ENCODE measurements at regions of chr5 and their contacts with region 1.

Region 1: DNA sequence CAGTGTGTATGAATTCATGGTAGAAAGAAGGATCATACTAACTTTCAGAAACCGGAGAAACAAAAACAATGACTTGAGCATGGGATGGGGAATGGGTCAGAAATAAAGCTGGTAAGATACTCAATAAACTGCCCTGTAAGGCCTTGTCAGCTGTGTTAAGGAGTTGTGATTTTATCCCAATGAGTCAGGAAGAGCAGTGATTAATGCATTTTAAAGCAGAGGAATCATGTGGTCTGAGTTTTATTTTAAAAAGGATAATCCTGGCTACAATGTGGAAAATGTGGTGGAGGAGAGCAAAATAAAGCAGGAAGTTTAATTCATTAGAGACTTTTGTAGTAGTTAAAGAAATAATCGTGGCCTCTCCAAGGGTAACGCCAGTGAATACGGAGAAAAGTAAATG is 28.7 kb downstream of the DHX29 start:
- H3K4me3 Mint-ChIP-seq: no peak overlapping the region
- H3K27ac Mint-ChIP-seq: no peak overlapping the region
- H3K4me1 Mint-ChIP-seq: no peaks in the 10 kb centered on the region
- H3K27me3 Mint-ChIP-seq: no peaks in the 10 kb centered on the region

Region 2: GRCh38 chr5:55763746-55764420 is 485.1 kb after region 1 on chr5:
- intact Hi-C with region 1: no loop called
- H3K4me3 Mint-ChIP-seq: no peak overlapping the region
- H3K27ac Mint-ChIP-seq: no peak overlapping the region
- H3K4me1 Mint-ChIP-seq: no peaks in the 10 kb centered on the region
- H3K27me3 Mint-ChIP-seq: peaks cover 5% of the 10 kb centered on the region

Region 3: DNA sequence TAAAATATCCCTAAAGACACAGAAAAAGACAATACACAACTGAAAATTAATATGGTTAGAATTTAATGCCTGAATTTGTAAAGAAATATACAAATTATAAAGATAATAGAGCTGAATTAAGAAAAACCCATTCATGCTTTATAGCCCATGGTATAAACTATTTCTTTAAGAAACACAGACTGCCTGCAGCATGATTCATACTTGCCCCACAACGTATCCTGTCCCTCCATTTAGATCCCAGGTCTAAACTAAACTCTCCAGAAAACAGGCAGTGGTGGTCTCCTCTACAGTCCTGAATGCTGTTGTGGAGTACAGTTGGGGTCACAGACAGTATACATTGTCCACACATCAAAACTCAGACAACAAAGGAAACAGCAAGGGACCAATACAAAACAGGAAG is 691.2 kb after region 1 on chr5:
- intact Hi-C with region 1: loop called (anchors 10 kb)
- H3K4me3 Mint-ChIP-seq: no peak overlapping the region
- H3K27ac Mint-ChIP-seq: no peak overlapping the region
- H3K4me1 Mint-ChIP-seq: peaks cover 19% of the 10 kb centered on the region
- H3K27me3 Mint-ChIP-seq: no peaks in the 10 kb centered on the region